PC-3 (cell line): ENCODE measurements at regions of chr3 and their contacts with region 1.

Region 1: DNA sequence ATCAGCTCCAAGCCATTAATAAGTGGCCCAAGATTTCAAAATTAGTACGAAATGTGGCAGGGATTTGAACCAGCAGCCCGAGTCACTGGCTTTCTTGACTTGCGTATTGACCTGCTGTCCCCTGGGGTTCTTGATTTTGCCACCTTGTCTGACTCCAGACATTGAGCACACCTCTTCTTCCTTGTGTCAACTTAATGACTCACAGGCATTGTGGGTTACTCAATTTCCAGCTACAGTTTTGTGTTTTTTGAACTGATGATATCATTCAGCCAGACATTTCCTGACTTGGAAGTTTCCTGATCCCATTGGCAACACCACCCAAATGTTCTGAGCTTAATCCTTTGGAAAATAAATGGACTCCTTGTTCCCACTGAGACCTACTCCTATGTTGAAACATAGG is 64.2 kb downstream of the MOBP start:
- DNase-seq: peak; percentile 51
- ATAC-seq: no peak
- H3K4me3 ChIP-seq: no peak overlapping the region
- H3K27ac ChIP-seq: no peak overlapping the region
- H3K4me1 ChIP-seq: no peaks in the 10 kb centered on the region
- H3K27me3 ChIP-seq: peaks cover 18% of the 10 kb centered on the region
- CTCF ChIP-seq: no peak

Region 2: GRCh38 chr3:39453134-39453533 is 78.5 kb before region 1 on chr3:
- CTCF ChIA-PET with region 1: no interaction called
- POLR2A ChIA-PET with region 1: interaction called, 15 read pairs
- intact Hi-C with region 1: no loop called
- DNase-seq: no peak
- ATAC-seq: no peak
- H3K4me3 ChIP-seq: no peak overlapping the region
- H3K27ac ChIP-seq: no peak overlapping the region
- H3K4me1 ChIP-seq: peaks cover 5% of the 10 kb centered on the region; the same call in 1 of the 2 replicates
- H3K27me3 ChIP-seq: peaks cover 32% of the 10 kb centered on the region
- CTCF ChIP-seq: no peak

Region 3: DNA sequence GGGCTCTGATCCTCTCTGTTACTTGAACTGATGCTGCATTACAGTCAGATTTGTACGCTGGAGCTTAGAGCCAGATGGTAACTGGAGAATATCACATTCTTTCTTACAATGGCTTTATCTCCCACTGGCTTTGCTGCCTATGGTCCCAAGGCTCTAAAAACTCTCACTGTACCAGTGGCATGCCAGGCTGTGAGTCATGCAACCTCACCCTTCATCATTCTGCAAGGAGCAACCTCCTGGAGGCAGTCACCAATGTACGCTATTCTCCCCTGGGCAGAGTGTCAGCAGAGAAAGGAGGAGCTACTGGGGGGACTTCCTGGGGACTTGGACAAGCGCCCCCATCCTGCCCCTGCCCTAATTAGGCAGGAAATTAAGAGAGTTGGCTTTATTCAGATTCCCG is 679.9 kb after region 1 on chr3:
- CTCF ChIA-PET with region 1: no interaction called
- POLR2A ChIA-PET with region 1: interaction called, 10 read pairs
- intact Hi-C with region 1: no loop called
- DNase-seq: peak; percentile 56
- ATAC-seq: peak; percentile 57
- H3K4me3 ChIP-seq: no peak overlapping the region
- H3K27ac ChIP-seq: no peak overlapping the region
- H3K4me1 ChIP-seq: no peaks in the 10 kb centered on the region
- H3K27me3 ChIP-seq: peaks cover 20% of the 10 kb centered on the region
- CTCF ChIP-seq: no peak